Naive thymus-derived CD4-positive, alpha-beta T cell (primary cell): ENCODE measurements at regions of chr16 and their contacts with region 1.

Region 1: DNA sequence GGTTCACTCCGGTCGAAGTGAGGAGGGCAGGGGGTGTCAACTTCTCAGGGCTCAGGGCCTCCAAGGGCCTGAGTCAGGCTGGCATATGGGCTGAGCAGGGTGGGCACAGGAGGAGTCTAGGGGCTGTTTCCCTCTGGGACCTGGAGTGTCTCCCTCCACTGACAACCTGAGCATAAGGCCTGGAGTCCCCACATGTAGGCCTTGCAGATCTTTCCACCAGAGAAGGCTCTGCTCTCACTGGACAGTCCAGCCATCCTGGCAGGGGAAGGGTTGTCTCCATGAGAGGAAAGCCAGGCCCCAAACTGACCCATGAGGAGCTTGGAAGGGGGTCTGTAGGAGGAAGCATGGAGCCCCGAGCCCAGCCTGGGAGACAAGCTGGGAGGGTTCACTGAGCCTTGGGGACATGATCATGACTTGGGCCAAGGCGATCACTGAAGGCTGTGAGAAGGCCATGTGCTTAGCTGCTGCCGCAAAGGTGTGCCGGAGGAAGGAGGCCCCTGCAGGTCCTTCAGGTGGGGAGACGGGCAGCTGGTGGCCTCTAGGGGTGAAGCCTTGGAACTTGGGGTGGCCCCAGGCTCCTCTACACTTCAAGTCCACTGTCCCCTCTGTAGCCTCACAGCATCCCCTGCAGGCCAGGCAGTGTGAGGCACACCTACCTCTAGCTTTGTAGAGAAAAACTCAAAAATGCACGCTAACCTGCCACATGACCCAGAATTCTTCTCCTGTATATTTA is 9.9 kb downstream of the CMTM2 start:
- DNase-seq: peak; percentile 36 to 73 (median 60)
- ATAC-seq: peak; percentile 98
- H3K4me3 ChIP-seq: no peak overlapping the region
- H3K4me3 Mint-ChIP-seq: peak overlapping the region; percentile 73 to 96 (median 87)
- H3K27ac ChIP-seq: no peak overlapping the region
- H3K27ac Mint-ChIP-seq: peak overlapping the region; percentile 75 to 90 (median 83)
- H3K4me1 ChIP-seq: peaks cover 6 to 7% of the 10 kb centered on the region in 2 donors
- H3K4me1 Mint-ChIP-seq: peaks cover 27 to 51% (median 39%) of the 10 kb centered on the region in 7 donors
- H3K27me3 ChIP-seq: no peaks in the 10 kb centered on the region
- H3K27me3 Mint-ChIP-seq: peaks cover 0 to 2% (median 0%) of the 10 kb centered on the region in 5 donors

Region 2: GRCh38 chr16:64730261-64730660 is 1858.9 kb before region 1 on chr16:
- CTCF ChIA-PET with region 1: no interaction called
- POLR2A ChIA-PET with region 1: no interaction called
- intact Hi-C with region 1: no loop called
- DNase-seq: no peak
- ATAC-seq: no peak
- H3K4me3 ChIP-seq: no peak overlapping the region
- H3K4me3 Mint-ChIP-seq: no peak overlapping the region
- H3K27ac ChIP-seq: no peak overlapping the region
- H3K27ac Mint-ChIP-seq: no peak overlapping the region
- H3K4me1 ChIP-seq: no peaks in the 10 kb centered on the region
- H3K4me1 Mint-ChIP-seq: no peaks in the 10 kb centered on the region
- H3K27me3 ChIP-seq: no peaks in the 10 kb centered on the region
- H3K27me3 Mint-ChIP-seq: no peaks in the 10 kb centered on the region

Region 3: DNA sequence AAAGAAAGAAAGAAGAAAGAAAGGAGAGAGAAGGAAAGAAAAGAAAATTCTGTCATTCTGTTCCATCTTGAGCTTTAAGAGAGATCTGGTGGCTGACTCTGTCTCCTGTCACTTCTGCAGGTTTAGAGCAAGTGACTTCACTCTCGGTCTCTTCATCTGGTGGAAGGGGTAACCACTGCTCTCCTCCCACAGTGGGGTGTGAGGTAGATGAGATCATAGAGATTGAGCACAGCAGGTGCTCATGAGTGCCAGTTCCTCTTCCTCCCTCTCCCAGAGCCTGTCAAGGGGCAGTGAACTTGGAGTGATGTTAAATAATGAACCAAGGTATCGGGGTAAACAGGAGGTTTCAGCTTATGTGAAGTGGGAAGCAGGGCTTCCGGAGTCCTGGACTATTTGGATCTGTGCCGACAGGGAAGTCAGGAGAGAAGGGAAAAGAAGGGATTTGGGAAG is 114.4 kb before region 1 on chr16:
- CTCF ChIA-PET with region 1: interaction called, 15 read pairs
- POLR2A ChIA-PET with region 1: no interaction called
- intact Hi-C with region 1: loop called (anchors 1 kb)
- DNase-seq: peak in 8 of 9 donors; percentile 49 to 76 (median 65)
- ATAC-seq: peak; percentile 85
- H3K4me3 ChIP-seq: no peak overlapping the region
- H3K4me3 Mint-ChIP-seq: peak overlapping the region in 9 of 10 donors; percentile 7 to 55 (median 36)
- H3K27ac ChIP-seq: peak overlapping the region; percentile 47
- H3K27ac Mint-ChIP-seq: peak overlapping the region; percentile 71 to 94 (median 86)
- H3K4me1 ChIP-seq: peaks cover 21 to 28% of the 10 kb centered on the region in 2 donors
- H3K4me1 Mint-ChIP-seq: peaks cover 13 to 35% (median 32%) of the 10 kb centered on the region in 7 donors
- H3K27me3 ChIP-seq: no peaks in the 10 kb centered on the region
- H3K27me3 Mint-ChIP-seq: peaks cover 0 to 5% (median 0%) of the 10 kb centered on the region in 5 donors

Region 4: DNA sequence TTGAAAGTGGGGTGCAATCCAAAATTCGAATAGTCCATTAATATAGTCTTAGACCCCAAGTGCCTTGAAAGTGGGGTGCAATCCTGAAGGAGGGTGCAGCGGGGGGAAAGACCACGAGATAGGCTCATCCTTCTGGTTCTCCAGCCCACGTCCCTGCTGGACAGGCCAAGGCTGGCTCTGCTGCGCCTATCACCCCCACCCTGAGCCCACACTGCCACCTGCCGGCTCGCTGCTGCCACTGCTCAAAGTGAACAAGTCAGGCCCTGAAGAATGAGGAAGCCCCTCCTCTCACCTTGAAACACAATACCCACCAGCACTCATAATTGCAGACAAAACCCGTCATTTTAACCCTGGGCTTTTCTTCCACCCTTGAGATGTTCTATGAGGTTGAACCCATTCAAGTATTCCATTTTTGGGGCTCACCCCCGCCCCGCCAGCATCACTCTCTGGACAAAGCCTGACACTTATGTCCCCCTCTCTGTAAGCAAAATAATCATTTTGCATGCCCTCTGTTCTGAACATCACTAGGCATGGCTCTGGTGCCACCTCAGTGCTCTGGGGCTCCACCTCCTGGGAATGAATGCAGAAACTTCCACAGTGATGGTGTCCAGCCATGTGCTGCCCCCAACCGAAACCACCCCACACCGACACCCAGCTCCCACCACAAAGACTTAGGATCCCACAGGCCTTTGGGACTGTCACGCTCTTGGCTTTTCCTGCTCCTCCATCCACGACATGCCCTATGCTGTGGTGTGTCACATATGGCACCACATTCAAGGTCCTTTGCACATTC is 105.3 kb before region 1 on chr16:
- CTCF ChIA-PET with region 1: interaction called, 5 read pairs
- POLR2A ChIA-PET with region 1: interaction called, 3 read pairs
- intact Hi-C with region 1: loop called (anchors 1 kb)
- DNase-seq: peak; percentile 55 to 79 (median 64)
- ATAC-seq: peak; percentile 84
- H3K4me3 ChIP-seq: no peak overlapping the region
- H3K4me3 Mint-ChIP-seq: peak overlapping the region in 1 of 10 donors; percentile 9
- H3K27ac ChIP-seq: no peak overlapping the region
- H3K27ac Mint-ChIP-seq: peak overlapping the region in 4 of 9 donors; percentile 44 to 88 (median 68)
- H3K4me1 ChIP-seq: peaks cover 7 to 8% of the 10 kb centered on the region in 2 donors
- H3K4me1 Mint-ChIP-seq: peaks cover 6 to 40% (median 17%) of the 10 kb centered on the region in 7 donors
- H3K27me3 ChIP-seq: no peaks in the 10 kb centered on the region
- H3K27me3 Mint-ChIP-seq: no peaks in the 10 kb centered on the region

Region 5: GRCh38 chr16:66511615-66512500 is 77.3 kb before region 1 on chr16:
- CTCF ChIA-PET with region 1: interaction called, 24 read pairs
- POLR2A ChIA-PET with region 1: no interaction called
- intact Hi-C with region 1: loop called in 1 of 2 experiments (anchors 1 kb)
- DNase-seq: no peak
- ATAC-seq: no peak
- H3K4me3 ChIP-seq: no peak overlapping the region
- H3K4me3 Mint-ChIP-seq: no peak overlapping the region
- H3K27ac ChIP-seq: no peak overlapping the region
- H3K27ac Mint-ChIP-seq: peak overlapping the region in 1 of 9 donors; percentile 24
- H3K4me1 ChIP-seq: peaks cover 18 to 21% of the 10 kb centered on the region in 2 donors
- H3K4me1 Mint-ChIP-seq: peaks cover 26 to 37% (median 30%) of the 10 kb centered on the region in 7 donors
- H3K27me3 ChIP-seq: no peaks in the 10 kb centered on the region
- H3K27me3 Mint-ChIP-seq: no peaks in the 10 kb centered on the region

Region 6: DNA sequence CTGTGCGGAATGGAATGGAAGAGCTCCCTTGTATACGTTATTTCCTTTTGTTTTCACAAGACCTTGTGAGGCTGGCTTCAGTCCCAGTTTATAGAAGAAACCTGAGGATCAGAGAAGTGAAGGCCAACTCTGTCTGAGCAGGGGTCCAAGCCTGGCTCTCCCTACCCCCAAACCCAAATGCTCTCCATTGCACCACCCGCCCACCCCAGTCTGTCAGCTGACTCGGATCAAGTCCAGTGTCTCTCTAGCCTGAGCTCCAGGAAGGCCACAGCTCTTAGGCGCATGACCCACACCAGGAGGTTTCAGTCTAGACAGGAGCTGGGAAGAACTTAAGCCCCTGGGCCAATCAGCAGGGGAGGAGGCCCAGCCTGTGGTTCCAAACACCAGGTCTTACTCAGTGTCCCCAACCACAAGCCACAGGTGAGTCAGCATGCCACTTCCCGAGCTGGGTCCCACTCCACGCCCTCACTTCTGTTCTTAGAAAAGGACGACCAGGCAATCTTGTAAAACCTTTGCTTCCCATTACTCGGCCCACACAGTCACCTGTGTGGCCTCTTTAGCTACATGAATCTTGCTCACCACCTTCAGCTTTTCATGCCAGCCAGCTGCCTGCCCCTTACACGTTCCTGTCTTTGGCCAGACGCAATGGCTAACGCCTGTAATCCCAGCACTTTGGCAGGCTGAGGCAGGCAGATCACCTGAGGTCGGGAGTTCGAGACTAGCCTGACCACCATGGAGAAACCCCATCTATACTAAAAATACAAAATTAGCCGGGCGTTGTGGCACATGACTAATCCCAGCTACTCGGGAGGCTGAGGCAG is 67.0 kb before region 1 on chr16:
- CTCF ChIA-PET with region 1: interaction called, 4 read pairs
- POLR2A ChIA-PET with region 1: interaction called, 4 read pairs
- intact Hi-C with region 1: loop called in 1 of 2 experiments (anchors 1 kb)
- DNase-seq: peak in 8 of 9 donors; percentile 26 to 92 (median 42)
- ATAC-seq: peak; percentile 65
- H3K4me3 ChIP-seq: peak overlapping the region; percentile 39
- H3K4me3 Mint-ChIP-seq: peak overlapping the region; percentile 71 to 85 (median 80)
- H3K27ac ChIP-seq: no peak overlapping the region
- H3K27ac Mint-ChIP-seq: peak overlapping the region; percentile 79 to 96 (median 91)
- H3K4me1 ChIP-seq: peaks cover 73 to 74% of the 10 kb centered on the region in 2 donors
- H3K4me1 Mint-ChIP-seq: peaks cover 69 to 97% (median 85%) of the 10 kb centered on the region in 7 donors
- H3K27me3 ChIP-seq: no peaks in the 10 kb centered on the region
- H3K27me3 Mint-ChIP-seq: peaks cover 0 to 4% (median 0%) of the 10 kb centered on the region in 5 donors

Region 7: DNA sequence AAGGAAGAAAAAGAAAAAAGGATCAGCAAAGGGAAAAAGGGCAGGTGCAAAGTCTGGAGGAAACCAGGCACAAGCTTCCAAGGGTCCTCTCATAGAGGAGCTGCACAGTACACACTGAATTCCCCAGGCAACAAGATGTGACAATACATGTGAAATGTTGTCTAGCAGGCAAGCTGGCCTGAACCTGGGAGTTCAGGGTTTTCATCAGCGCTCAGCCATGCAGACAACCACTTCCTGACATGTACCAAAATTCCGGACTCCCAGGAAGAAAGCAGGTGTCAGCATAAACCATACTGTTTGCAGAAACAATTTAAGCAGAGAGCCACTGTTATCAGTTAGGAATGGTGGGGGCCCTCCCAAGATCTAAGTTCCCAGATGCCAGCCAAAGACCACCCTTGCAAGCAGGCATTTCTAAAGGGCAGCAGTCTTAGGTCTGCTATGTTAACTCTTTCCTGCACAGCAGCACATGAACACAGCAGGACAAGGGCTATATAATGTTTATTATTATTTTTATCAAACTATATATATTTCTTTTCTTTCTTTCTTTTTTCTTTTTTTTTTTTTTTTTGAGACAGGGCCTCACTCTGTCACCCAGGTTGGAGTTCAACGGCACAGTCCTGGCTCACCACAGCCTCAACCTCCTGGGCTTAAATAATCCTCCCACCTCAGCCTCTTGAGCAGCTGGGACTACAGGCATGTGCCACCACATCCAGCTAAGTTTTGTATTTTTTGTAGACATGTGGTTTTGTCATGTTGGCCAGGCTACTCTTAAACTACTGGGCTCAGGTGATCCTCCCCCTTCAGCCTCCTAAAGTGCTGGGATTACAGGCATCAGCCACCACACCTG is 49.3 kb before region 1 on chr16:
- CTCF ChIA-PET with region 1: no interaction called
- POLR2A ChIA-PET with region 1: no interaction called
- intact Hi-C with region 1: no loop called
- DNase-seq: no peak
- ATAC-seq: no peak
- H3K4me3 ChIP-seq: no peak overlapping the region
- H3K4me3 Mint-ChIP-seq: peak overlapping the region in 3 of 10 donors; percentile 14 to 39 (median 27)
- H3K27ac ChIP-seq: no peak overlapping the region
- H3K27ac Mint-ChIP-seq: peak overlapping the region in 5 of 9 donors; percentile 47 to 71 (median 63)
- H3K4me1 ChIP-seq: peaks cover 0 to 3% of the 10 kb centered on the region in 2 donors
- H3K4me1 Mint-ChIP-seq: peaks cover 12 to 43% (median 20%) of the 10 kb centered on the region in 7 donors
- H3K27me3 ChIP-seq: no peaks in the 10 kb centered on the region
- H3K27me3 Mint-ChIP-seq: no peaks in the 10 kb centered on the region

Region 8: DNA sequence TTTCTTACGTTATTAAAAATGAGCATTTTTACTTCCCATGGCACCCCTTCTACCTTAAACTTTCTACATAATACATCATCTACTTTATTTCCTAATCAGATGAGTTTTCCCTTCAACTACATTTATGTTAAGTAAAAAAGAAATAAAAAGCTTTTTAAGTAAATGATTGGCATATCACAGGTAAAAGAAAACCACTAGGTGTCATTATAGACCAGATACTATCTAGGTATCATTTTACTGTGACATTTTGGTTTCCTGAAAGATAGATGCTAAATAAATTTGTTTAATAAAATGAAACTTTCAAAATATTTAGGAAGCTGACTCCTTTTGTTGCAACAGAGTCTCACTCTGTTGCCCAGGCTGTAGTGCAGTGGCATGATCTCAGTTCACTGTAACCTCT is 26.7 kb before region 1 on chr16:
- CTCF ChIA-PET with region 1: interaction called, 11 read pairs
- POLR2A ChIA-PET with region 1: interaction called, 3 read pairs
- intact Hi-C with region 1: loop called (anchors 1 kb)
- DNase-seq: peak in 4 of 9 donors; percentile 21 to 53 (median 34)
- ATAC-seq: peak; percentile 60
- H3K4me3 ChIP-seq: no peak overlapping the region
- H3K4me3 Mint-ChIP-seq: no peak overlapping the region
- H3K27ac ChIP-seq: no peak overlapping the region
- H3K27ac Mint-ChIP-seq: peak overlapping the region in 5 of 9 donors; percentile 14 to 71 (median 26)
- H3K4me1 ChIP-seq: peaks cover 22 to 46% of the 10 kb centered on the region in 2 donors
- H3K4me1 Mint-ChIP-seq: peaks cover 31 to 67% (median 41%) of the 10 kb centered on the region in 7 donors
- H3K27me3 ChIP-seq: no peaks in the 10 kb centered on the region
- H3K27me3 Mint-ChIP-seq: no peaks in the 10 kb centered on the region

Region 9: GRCh38 chr16:66668777-66669444 is 79.8 kb after region 1 on chr16:
- CTCF ChIA-PET with region 1: no interaction called
- POLR2A ChIA-PET with region 1: no interaction called
- intact Hi-C with region 1: no loop called
- DNase-seq: no peak
- ATAC-seq: no peak
- H3K4me3 ChIP-seq: no peak overlapping the region
- H3K4me3 Mint-ChIP-seq: no peak overlapping the region
- H3K27ac ChIP-seq: no peak overlapping the region
- H3K27ac Mint-ChIP-seq: no peak overlapping the region
- H3K4me1 ChIP-seq: no peaks in the 10 kb centered on the region
- H3K4me1 Mint-ChIP-seq: peaks cover 0 to 2% (median 0%) of the 10 kb centered on the region in 7 donors
- H3K27me3 ChIP-seq: no peaks in the 10 kb centered on the region
- H3K27me3 Mint-ChIP-seq: no peaks in the 10 kb centered on the region

Region 10: GRCh38 chr16:66936889-66937554 is 347.9 kb after region 1 on chr16:
- CTCF ChIA-PET with region 1: no interaction called
- POLR2A ChIA-PET with region 1: no interaction called
- intact Hi-C with region 1: no loop called
- DNase-seq: no peak
- ATAC-seq: no peak
- H3K4me3 ChIP-seq: no peak overlapping the region
- H3K4me3 Mint-ChIP-seq: peak overlapping the region; percentile 12 to 99 (median 97)
- H3K27ac ChIP-seq: peak overlapping the region; percentile 97
- H3K27ac Mint-ChIP-seq: peak overlapping the region; percentile 9 to 98 (median 72)
- H3K4me1 ChIP-seq: peaks cover 24 to 31% of the 10 kb centered on the region in 2 donors
- H3K4me1 Mint-ChIP-seq: peaks cover 35 to 59% (median 51%) of the 10 kb centered on the region in 7 donors
- H3K27me3 ChIP-seq: no peaks in the 10 kb centered on the region
- H3K27me3 Mint-ChIP-seq: no peaks in the 10 kb centered on the region